KBM-7 (cell line): ENCODE measurements at regions of chr2 and their contacts with region 1.

Region 1: DNA sequence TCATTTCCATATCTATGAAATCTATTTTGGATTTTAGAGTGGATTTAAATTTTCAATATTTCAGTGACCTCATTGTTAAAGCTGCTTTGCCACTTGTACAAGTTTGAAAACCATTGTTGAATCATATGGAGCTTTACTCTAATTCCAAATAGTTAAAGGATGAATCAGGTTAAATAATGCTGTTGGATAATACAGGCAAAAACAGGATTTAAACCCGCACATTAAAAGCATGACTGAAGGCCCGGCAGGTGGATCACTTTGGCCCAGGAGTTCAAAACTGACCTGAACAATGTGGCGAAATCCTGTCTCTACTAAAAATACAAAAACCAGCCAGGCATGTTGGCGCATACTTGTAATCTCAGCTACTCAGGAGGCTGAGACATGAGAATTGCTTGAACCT is 68.3 kb downstream of the RIF1 start:
- DNase-seq: no peak

Region 2: GRCh38 chr2:150806336-150806735 is 671.7 kb before region 1 on chr2:
- in situ Hi-C with region 1: no loop called
- DNase-seq: no peak

Region 3: DNA sequence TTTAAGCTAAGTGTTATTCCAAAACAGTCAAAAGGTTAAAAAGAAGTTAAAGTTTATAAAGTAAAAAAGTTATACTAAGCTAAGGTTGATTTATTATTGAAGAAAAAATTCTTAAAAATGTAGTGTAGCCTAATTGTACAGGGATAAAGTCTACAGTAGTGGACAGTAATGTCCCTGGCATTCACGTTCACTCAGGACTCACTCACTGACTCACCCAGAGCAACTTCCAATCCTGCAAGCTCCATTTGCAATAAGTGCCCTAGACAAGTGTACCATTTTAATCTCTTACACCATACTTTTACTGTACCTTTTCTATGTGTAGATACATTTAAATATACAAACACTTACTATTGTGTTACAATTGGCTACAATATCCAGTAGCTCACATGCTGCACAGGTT is 534.7 kb after region 1 on chr2:
- in situ Hi-C with region 1: loop called (anchors 25 kb)
- DNase-seq: no peak